Panc1 (cell line): ENCODE measurements at regions of chr10 and their contacts with region 1.

Region 1: GRCh38 chr10:36109399-36110023 is 467.4 kb upstream of the FZD8 start:
- DNase-seq: no peak
- ATAC-seq: no peak
- H3K4me3 ChIP-seq: no peak overlapping the region
- H3K27ac ChIP-seq: no peak overlapping the region
- H3K4me1 ChIP-seq: no peaks in the 10 kb centered on the region
- H3K27me3 ChIP-seq: no peaks in the 10 kb centered on the region
- CTCF ChIP-seq: no peak

Region 2: GRCh38 chr10:35898716-35899440 is 210.6 kb before region 1 on chr10:
- CTCF ChIA-PET with region 1: no interaction called
- POLR2A ChIA-PET with region 1: interaction called, 10 read pairs
- in situ Hi-C with region 1: no loop called
- intact Hi-C with region 1: no loop called
- DNase-seq: no peak
- ATAC-seq: no peak
- H3K4me3 ChIP-seq: no peak overlapping the region
- H3K27ac ChIP-seq: no peak overlapping the region
- H3K4me1 ChIP-seq: no peaks in the 10 kb centered on the region
- H3K27me3 ChIP-seq: no peaks in the 10 kb centered on the region
- CTCF ChIP-seq: no peak

Region 3: GRCh38 chr10:36141856-36142560 is 32.5 kb after region 1 on chr10:
- CTCF ChIA-PET with region 1: no interaction called
- POLR2A ChIA-PET with region 1: no interaction called
- in situ Hi-C with region 1: no loop called
- intact Hi-C with region 1: no loop called
- DNase-seq: no peak
- ATAC-seq: no peak
- H3K4me3 ChIP-seq: no peak overlapping the region
- H3K27ac ChIP-seq: no peak overlapping the region
- H3K4me1 ChIP-seq: no peaks in the 10 kb centered on the region
- H3K27me3 ChIP-seq: no peaks in the 10 kb centered on the region
- CTCF ChIP-seq: no peak